ENCODE measurements at regions of chr2 and their contacts with region 1.

Region 1: DNA sequence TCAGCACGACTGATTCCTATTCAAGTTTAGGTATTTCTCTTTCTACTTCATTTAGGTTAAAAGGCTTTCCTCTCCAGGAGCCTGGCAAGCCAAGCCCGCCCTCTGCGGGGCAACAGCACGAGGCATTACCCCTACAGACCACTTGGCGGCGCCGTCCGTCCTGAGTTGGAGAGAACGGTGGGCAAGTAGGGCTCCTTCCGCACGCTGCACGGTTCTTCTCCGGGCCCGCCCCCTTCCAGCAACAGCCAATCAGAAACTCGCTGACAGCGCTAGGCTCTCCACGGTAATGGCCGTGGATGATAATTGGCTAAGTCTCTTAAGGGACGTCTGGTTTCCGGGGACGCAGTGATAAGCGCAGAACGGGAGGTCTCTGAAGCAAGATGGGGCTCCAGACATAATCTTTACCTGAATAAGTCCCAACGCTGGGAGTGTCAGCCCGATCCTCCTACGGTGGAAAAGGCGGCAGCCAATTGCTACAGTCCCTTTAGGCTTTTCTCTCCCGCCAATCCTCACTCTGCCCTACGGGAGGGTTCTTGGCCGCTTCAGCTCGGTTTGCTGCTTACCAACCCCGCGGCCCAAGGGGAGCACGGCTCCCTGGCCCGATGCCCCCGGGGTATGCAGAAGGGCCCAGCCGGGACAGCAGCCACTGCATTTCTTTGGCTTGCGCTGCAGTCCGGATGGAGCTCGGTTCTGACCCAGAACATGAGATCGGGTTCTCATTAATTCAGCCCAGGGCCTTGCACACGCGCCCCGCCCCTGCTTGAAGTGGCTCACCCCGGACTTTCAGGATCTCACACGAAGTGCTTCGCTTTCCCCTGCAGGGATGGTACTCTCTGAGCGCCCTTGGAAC is 206.9 kb upstream of the PKDCC start:
- DNase-seq: peak; percentile 95
- ATAC-seq: peak; percentile 99
- H3K4me3 ChIP-seq: peak overlapping the region; percentile 76 to 78
- H3K27ac ChIP-seq: peak overlapping the region; percentile 40; the same call in 1 of the 2 replicates
- H3K4me1 ChIP-seq: peaks cover 5 to 13% of the 10 kb centered on the region in 2 experiments; a peak in 3 of 4 replicates
- H3K27me3 ChIP-seq: peaks cover 16% of the 10 kb centered on the region; the same call in 1 of the 2 replicates
- CTCF ChIP-seq: peak; percentile 98 to 99 (median 98)
- POLR2A ChIP-seq: peak; percentile 64
- RAD21 ChIP-seq: peak; percentile 90

Region 2: DNA sequence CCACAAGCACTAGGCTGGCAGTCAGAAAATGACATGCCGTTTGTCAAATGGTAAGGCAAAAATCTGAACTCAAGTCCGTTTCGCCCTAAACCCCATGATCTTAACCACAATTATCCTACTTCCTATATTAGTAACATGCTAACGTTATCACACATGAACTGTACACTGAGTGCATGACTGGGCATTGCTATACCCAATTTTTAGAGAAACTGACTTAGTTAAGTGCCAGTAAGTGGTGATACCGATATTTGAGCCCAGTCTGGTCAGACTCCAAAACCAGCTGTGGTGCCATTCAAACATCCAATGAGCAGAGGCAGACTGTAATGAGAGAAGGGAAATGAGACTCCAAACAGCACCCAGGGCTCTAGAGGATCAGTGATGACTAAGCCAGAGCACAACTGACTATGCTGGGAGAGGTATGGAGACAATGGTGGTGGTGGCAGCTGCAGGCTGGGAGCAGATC is 104.8 kb before region 1 on chr2:
- CTCF ChIA-PET with region 1: no interaction called
- POLR2A ChIA-PET with region 1: no interaction called
- RAD21 ChIA-PET with region 1: no interaction called
- intact Hi-C with region 1: no loop called
- DNase-seq: no peak
- ATAC-seq: no peak
- H3K4me3 ChIP-seq: no peak overlapping the region
- H3K27ac ChIP-seq: no peak overlapping the region
- H3K4me1 ChIP-seq: no peaks in the 10 kb centered on the region
- H3K27me3 ChIP-seq: peaks cover 43% of the 10 kb centered on the region
- CTCF ChIP-seq: no peak
- POLR2A ChIP-seq: no peak
- RAD21 ChIP-seq: no peak

Region 3: DNA sequence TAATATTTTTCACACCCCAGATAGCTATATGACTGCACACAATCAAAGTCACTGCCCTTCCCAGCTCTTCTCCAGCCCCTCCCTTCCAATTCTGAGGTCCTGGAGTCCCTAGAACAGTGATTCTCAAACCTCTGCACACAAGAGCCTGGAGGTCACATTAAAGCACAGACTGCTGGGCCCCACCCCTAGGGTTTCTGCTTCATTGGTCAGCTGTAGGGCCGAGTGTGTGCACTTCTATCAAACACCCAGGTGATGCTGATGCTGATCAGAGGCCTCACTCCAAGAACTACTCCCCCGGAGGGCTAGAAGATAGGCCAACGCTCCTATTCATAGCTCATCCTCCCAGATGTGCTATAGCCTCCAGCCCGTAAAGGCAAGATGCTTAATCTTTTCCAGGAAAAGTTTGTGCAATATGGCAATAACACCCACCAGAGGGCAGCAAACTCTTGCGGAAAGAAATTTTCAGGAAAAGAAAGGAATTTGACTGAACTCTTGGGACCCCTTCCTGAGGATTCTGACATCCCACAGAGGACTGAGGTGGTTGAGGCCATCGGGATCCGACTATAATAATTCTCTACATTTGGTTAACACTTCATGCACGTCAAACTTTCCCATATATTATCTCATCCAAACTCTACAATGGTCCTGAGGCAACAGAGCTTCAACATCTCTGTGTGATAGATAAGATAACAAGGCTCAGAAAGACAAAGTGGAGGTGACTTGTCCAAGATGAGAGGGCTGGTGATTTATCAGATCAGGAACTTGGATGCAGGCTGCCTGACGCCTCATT is 12.7 kb after region 1 on chr2:
- CTCF ChIA-PET with region 1: interaction called, 14 read pairs
- POLR2A ChIA-PET with region 1: interaction called, 3 read pairs
- RAD21 ChIA-PET with region 1: interaction called in 1 of 2 experiments, 4 read pairs
- intact Hi-C with region 1: no loop called
- DNase-seq: peak; percentile 35
- ATAC-seq: peak; percentile 82
- H3K4me3 ChIP-seq: no peak overlapping the region
- H3K27ac ChIP-seq: no peak overlapping the region
- H3K4me1 ChIP-seq: no peaks in the 10 kb centered on the region
- H3K27me3 ChIP-seq: peaks cover 12% of the 10 kb centered on the region
- CTCF ChIP-seq: peak; percentile 67 to 91 (median 80)
- POLR2A ChIP-seq: no peak
- RAD21 ChIP-seq: peak; percentile 94

Region 4: GRCh38 chr2:42328148-42328833 is 487.4 kb after region 1 on chr2:
- CTCF ChIA-PET with region 1: no interaction called
- POLR2A ChIA-PET with region 1: no interaction called
- RAD21 ChIA-PET with region 1: no interaction called
- intact Hi-C with region 1: loop called (anchors 10 kb)
- DNase-seq: peak; percentile 7
- ATAC-seq: peak; percentile 65
- H3K4me3 ChIP-seq: no peak overlapping the region
- H3K27ac ChIP-seq: no peak overlapping the region
- H3K4me1 ChIP-seq: no peaks in the 10 kb centered on the region
- H3K27me3 ChIP-seq: no peaks in the 10 kb centered on the region
- CTCF ChIP-seq: peak; percentile 44 to 60 (median 60); a peak in 5 of 6 replicates
- POLR2A ChIP-seq: no peak
- RAD21 ChIP-seq: peak; percentile 63

Measured in HCT116 (cell line).